HEK293 (cell line): ENCODE measurements at regions of chr5 and their contacts with region 1.

Region 1: DNA sequence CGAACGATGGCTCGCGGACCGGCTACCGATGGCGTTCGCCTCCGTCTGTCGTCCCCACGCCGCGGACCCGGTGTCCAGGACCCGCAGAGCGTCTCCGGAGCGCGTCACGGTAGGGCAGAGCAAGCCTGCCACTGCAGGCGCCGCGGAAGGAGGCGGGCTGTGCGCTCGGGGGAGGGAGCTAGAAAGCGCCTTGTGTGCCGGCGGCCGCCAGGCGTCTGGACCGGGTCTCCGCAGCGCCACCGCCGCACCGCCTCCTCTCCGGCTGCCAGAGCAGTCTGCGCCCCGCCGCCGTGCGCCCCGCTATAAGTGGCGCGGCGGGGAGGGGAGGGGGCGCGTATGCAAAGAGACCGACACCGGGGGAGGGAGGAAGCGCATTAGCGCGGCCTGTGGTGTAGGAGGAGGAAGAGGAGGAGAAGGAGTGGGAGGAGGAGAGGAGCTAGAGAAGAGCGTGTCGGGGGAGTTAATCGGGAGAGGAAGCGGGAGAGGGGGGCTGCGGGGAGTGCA is at the start of gene ENC1:
- H3K4me3 ChIP-seq: peak within 1 kb of the TSS; percentile 92
- H3K27ac ChIP-seq: peak within 1 kb of the TSS; percentile 98
- H3K4me1 ChIP-seq: peaks cover 17% of the 10 kb centered on the region
- CTCF ChIP-seq: peak; percentile 99

Region 2: DNA sequence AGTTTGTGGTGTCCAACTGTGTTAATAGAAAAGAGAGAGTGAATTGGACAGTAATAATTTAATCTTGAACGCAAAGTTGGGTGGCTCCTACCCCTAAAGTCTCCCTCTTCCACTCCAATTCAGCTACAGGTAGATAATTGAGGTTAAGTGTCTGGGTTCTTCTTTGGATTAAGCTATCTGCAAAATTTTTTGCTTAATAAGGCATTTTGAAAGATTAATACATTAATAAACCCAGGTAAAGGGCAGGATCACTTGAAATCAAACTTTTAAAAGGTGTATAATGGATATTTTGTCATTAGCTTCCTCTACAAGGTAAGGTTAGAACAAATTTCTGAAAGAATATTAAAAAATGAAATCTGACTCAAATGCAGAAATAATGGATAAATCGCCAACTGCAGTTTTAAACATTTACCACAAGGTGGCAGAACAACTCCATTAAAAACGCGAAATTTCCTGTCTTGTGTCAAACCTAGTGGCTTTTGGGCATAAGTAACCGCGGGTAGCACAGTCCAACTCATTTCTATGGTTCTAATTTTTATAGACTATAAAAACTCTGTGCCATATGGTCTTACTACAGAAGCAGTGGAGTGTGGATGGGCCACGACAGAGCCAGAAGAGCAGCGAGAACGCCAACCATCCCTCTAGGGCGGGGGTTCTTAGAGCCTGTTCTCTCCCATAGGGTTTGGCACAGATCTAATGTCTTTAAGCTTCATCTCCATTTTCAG is 738.0 kb before region 1 on chr5:
- CTCF ChIA-PET with region 1: interaction called, 13 read pairs
- POLR2A ChIA-PET with region 1: no interaction called
- H3K4me3 ChIP-seq: no peak overlapping the region
- H3K27ac ChIP-seq: no peak overlapping the region
- H3K4me1 ChIP-seq: no peaks in the 10 kb centered on the region
- CTCF ChIP-seq: peak; percentile 69

Region 3: GRCh38 chr5:74212336-74212735 is 428.2 kb before region 1 on chr5:
- CTCF ChIA-PET with region 1: interaction called, 10 read pairs
- POLR2A ChIA-PET with region 1: interaction called, 7 read pairs
- H3K4me3 ChIP-seq: no peak overlapping the region
- H3K27ac ChIP-seq: no peak overlapping the region
- H3K4me1 ChIP-seq: no peaks in the 10 kb centered on the region; the same call in 1 of the 2 replicates
- CTCF ChIP-seq: no peak

Region 4: GRCh38 chr5:74380193-74380592 is 260.3 kb before region 1 on chr5:
- CTCF ChIA-PET with region 1: interaction called, 3 read pairs
- POLR2A ChIA-PET with region 1: interaction called, 13 read pairs
- H3K4me3 ChIP-seq: no peak overlapping the region
- H3K27ac ChIP-seq: no peak overlapping the region
- H3K4me1 ChIP-seq: peaks cover 30% of the 10 kb centered on the region
- CTCF ChIP-seq: no peak

Region 5: GRCh38 chr5:74415695-74416102 is 224.8 kb before region 1 on chr5:
- CTCF ChIA-PET with region 1: no interaction called
- POLR2A ChIA-PET with region 1: interaction called, 15 read pairs
- H3K4me3 ChIP-seq: no peak overlapping the region
- H3K27ac ChIP-seq: peak overlapping the region; percentile 61
- H3K4me1 ChIP-seq: peaks cover 2% of the 10 kb centered on the region
- CTCF ChIP-seq: no peak

Region 6: DNA sequence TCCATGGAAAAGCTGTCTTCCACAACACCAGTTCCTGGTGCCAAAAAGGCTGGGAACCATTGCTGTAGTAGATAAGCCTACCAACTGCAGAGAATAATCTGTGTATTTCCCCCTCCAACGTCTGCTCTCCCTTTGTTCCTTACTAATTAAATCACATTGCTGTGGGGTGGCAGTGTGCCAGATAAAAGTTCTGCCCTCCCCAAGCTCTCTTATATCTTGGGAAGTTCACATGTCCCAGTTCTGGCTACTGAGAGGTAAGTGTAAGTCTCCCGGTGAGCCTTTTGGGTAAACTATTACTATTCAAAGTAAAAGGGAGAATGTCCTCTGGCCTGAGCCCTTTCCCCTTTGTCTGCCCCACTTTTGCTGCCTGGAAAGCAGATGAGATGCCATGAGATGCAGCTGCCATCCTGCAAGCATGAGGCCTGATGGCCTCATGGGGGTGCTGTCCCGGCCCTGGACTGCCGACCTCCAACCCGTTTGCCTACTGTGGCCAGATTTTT is 14.7 kb before region 1 on chr5:
- CTCF ChIA-PET with region 1: interaction called, 4 read pairs
- POLR2A ChIA-PET with region 1: interaction called, 29 read pairs
- H3K4me3 ChIP-seq: no peak overlapping the region
- H3K27ac ChIP-seq: no peak overlapping the region
- H3K4me1 ChIP-seq: peaks cover 20% of the 10 kb centered on the region
- CTCF ChIP-seq: no peak